Heart right ventricle (tissue), 16 donors: ENCODE measurements at regions of chr12 and their contacts with region 1.

Region 1: DNA sequence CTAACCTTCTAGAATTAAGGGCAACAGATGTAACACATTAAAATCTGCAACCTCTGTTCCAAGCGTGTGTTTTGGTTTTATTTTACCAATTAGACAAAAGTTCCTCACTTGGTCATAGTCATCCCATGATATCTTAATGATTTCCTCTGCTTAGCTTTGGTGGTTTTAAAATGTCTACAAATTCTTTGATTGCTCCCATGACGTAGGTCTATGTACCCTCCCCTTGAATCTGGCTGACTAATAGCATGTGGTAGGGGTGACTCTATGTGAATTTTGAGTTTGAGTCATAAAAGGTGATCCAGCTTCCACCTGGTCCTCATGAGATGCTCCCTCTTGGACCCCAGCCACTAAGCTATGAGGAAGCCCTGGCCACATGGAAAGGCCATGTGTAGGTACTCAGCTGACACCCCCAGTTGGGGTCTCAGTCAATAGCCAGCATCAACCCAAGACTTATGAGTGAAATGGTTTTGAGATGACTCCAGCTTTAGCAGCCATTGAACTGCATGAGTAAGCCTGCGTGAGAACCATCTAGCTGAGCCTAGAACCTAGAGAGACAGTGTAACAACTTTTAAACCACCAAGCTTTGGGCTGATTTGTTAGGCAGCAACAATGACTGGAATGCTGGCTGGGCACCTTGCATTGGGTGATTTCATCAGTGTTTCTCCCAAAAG is 247.1 kb downstream of the MSRB3 start:
- DNase-seq: no peak
- ATAC-seq: no peak
- H3K4me3 ChIP-seq: no peak overlapping the region
- H3K27ac ChIP-seq: no peak overlapping the region
- H3K4me1 ChIP-seq: no peaks in the 10 kb centered on the region
- H3K27me3 ChIP-seq: no peaks in the 10 kb centered on the region
- CTCF ChIP-seq: no peak

Region 2: GRCh38 chr12:64335772-64336466 is 1189.7 kb before region 1 on chr12:
- intact Hi-C with region 1: loop called in 1 of 10 experiments (anchors 5 kb)
- DNase-seq: no peak
- ATAC-seq: no peak
- H3K4me3 ChIP-seq: no peak overlapping the region
- H3K27ac ChIP-seq: no peak overlapping the region
- H3K4me1 ChIP-seq: no peaks in the 10 kb centered on the region
- H3K27me3 ChIP-seq: no peaks in the 10 kb centered on the region
- CTCF ChIP-seq: no peak

Region 3: GRCh38 chr12:65392491-65392890 is 133.1 kb before region 1 on chr12:
- intact Hi-C with region 1: no loop called
- DNase-seq: no peak
- ATAC-seq: no peak
- H3K4me3 ChIP-seq: no peak overlapping the region
- H3K27ac ChIP-seq: no peak overlapping the region
- H3K4me1 ChIP-seq: peaks cover 0 to 14% (median 0%) of the 10 kb centered on the region in 9 donors
- H3K27me3 ChIP-seq: no peaks in the 10 kb centered on the region
- CTCF ChIP-seq: no peak